AG04449 (cell line): ENCODE measurements at regions of chrX and their contacts with region 1.

Region 1: DNA sequence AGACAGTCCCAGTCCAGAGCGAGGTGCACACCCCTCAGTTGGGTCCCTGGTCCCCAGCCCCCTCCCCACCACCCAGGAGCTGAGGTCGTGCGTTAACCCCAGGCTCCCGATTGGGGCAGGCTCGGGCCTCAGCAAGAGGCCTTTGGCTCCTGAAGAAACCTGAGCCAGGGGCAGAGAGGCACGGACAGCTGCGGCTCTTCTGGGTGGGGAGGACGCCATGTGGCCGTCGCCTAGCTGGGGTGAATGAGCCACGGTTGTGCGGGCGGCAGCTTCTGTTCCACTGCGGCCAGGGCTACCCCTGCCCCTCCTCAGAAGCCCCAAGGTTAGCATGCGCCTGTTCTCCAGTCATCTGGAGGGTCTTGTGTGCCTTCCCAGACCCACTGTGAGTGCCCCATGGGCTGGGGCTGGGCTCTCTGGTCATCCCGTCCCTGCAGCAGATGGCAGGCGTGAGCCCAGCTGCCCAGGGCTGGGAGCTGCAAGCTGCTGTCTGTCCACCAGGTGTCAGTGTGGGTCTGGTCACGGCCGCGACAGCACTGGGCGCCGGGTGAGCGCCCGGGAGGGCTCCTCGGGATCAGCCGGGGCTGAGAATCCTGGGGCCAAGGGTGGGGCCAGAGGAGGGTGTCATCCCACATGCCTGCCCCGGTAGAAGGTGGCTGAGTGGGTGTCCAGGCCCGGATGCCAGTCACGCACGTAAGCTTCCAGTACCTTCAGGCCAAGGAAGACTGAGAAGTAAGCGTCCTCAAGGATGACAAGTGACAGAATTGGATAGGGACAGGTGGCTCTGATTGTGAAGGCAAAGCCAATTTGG is 21.9 kb downstream of the ATP2B3 start:
- DNase-seq: no peak
- H3K4me3 ChIP-seq: no peak overlapping the region
- CTCF ChIP-seq: peak; percentile 92

Region 2: DNA sequence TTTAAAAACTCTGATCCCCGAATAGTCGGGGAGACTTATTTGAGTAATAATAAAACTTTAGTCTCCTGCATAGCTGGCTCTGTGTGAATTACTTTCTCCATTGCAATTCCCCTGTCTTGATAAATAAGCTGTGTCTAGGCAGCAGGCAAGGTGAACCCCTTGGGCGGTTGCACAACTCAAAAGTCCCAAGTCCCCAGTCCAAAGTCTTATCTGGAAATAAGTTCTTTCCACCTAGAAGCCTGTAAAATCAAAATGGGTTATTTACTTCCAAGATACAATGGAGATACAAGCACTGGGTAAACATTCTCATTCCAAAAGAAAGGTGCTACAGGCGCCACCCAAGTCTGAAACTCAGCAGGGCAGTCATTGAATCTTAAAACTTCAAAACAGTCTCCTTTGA is 535.4 kb before region 1 on chrX:
- CTCF ChIA-PET with region 1: no interaction called
- POLR2A ChIA-PET with region 1: no interaction called
- DNase-seq: no peak
- H3K4me3 ChIP-seq: no peak overlapping the region
- CTCF ChIP-seq: no peak

Region 3: DNA sequence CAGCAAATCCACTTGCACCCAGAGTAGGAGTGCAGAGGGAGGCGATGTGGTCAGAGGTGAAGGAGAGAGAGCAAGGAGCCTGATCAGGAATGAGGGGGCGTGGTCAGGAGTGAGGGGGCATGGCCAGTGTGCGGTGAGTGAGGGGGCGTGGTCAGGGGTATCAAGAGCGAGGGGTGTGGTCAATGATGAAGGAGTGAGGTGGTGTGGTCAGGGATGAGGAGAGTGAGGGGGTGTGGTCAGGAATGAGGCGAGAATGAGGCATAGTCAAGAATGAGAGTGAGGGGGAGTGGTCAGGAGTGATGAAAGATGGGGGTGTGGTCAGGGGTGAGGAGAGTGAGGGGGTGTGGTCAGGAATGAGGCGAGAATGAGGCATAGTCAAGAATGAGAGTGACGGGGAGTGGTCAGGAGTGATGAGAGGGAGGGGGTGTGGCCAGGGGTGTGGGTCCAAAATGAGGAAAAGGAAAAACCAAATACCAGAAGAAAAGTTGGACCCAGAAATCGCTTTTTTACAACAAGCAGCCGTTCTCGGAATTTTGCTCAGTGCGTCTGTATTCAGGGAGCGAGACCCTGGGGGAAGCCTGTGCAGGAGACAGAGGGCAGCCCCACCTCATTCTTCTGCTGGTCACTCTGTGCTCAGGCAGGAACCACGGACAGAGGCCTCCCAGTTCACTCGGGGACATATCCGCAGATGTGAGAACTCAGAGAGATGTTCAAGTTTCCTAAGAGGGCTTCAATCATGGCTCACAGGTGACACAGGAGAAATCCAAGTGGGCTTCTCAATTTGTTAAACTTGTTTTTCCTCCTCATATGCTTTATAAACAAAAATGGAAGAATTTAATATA is 312.8 kb before region 1 on chrX:
- CTCF ChIA-PET with region 1: no interaction called
- POLR2A ChIA-PET with region 1: no interaction called
- DNase-seq: no peak
- H3K4me3 ChIP-seq: no peak overlapping the region
- CTCF ChIP-seq: no peak

Region 4: DNA sequence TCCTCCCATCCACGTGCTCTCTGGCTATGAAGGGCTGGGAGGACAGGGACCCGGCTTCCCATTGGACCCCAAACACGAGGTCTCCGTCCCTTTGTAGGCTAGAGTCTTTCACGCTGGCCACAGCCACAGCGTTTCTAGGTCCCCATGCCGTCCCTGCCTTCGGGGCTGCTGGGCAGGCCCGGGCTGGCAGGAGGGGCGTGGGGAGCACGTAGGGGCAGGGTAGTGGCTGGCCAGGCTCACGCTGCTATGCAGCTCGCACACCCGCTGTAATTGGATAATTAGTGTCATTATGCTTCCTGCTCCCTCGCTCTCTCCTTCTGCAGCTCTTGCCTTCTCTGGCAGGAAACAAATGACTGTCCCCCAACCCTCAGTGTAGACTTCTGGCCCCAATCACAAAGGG is 12.2 kb before region 1 on chrX:
- CTCF ChIA-PET with region 1: interaction called, 13 read pairs
- POLR2A ChIA-PET with region 1: no interaction called
- DNase-seq: no peak
- H3K4me3 ChIP-seq: no peak overlapping the region
- CTCF ChIP-seq: no peak

Region 5: GRCh38 chrX:153564051-153564736 is 24.8 kb after region 1 on chrX:
- CTCF ChIA-PET with region 1: interaction called, 10 read pairs
- POLR2A ChIA-PET with region 1: no interaction called
- DNase-seq: no peak
- H3K4me3 ChIP-seq: no peak overlapping the region
- CTCF ChIP-seq: no peak

Region 6: DNA sequence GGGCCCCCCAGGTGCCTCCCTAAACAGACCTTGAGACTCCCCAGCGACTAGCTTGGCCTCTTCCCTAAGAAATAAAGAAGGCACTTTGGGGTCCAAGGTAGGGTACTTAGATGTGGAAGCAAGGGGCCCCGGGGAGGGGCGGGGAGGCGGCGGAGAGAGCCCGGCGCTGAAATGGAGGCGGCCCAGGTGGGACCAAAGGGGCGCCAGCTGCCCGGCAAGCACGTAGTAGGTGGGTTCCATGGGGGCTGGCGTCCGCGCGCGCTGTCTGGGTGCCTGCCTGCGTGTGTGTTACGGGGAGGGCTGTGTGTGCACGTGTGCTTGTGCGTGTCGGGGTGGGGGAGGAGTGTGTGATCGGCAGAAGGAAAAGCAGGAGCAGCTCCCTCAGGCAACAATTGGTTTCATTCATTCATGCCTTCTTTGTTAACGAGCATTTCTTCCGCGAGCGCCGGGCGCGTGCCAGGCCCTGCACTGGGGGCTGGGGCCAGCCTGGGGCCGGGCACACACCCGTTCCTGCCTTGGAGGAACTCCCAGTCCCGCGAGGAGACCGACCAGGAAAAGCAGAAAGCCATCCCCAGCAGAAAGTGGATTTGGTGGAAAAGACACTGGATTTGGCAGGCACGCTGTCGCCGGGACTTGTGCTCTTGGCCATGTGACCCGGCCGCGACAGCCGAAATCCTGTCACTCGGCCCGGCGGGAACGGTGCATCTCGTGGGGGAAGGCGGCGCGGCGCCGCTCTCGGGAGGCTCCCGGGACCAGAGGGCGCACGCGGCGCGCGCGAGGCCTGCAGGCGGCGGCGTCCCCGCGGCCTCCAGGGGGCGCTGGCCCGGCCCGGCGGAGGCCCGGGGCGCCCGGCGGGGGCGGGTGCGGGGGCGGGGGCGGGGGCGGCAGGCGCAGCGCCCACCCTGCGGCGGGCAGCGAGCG is 104.3 kb after region 1 on chrX:
- CTCF ChIA-PET with region 1: interaction called, 12 read pairs
- POLR2A ChIA-PET with region 1: no interaction called
- DNase-seq: no peak
- H3K4me3 ChIP-seq: peak overlapping the region; percentile 15; the same call in 1 of the 2 replicates
- CTCF ChIP-seq: no peak

Region 7: DNA sequence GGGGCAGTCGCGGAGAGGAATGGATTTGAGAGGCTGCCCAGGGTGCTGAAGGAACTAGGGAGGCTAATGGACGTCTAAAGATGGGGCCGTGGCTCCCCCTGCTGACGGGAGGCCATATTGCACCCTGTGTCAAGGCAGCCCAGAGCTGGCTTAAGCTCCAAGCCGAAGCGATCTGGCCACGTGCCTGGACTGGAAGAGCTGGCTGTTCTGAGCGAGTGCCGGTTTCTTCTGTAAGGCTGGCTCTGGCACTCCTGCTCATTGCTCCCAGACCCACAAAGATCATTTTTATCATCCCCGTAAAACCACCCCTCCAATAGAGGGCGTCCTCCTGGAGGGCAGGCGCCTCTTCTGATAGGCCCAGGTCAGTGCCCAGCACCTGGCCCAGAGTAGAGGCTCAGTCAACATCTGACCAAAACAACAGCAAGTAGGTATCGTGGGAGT is 128.6 kb after region 1 on chrX:
- CTCF ChIA-PET with region 1: interaction called, 107 read pairs
- POLR2A ChIA-PET with region 1: no interaction called
- DNase-seq: no peak
- H3K4me3 ChIP-seq: peak overlapping the region; percentile 25; the same call in 1 of the 2 replicates
- CTCF ChIP-seq: peak; percentile 79